Breast epithelium (tissue), 4 donors: ENCODE measurements at regions of chr3 and their contacts with region 1.

Region 1: GRCh38 chr3:48552111-48552951 is 4.3 kb downstream of the PFKFB4 start:
- DNase-seq: peak in 1 of 2 donors; percentile 45
- H3K4me3 ChIP-seq: no peak overlapping the region
- H3K27ac ChIP-seq: peak overlapping the region; percentile 45 to 57
- H3K4me1 ChIP-seq: peaks cover 0 to 4% of the 10 kb centered on the region in 2 donors
- H3K27me3 ChIP-seq: no peaks in the 10 kb centered on the region
- CTCF ChIP-seq: no peak
- POLR2A ChIP-seq: no peak

Region 2: GRCh38 chr3:48294611-48295263 is 257.6 kb before region 1 on chr3:
- intact Hi-C with region 1: no loop called
- DNase-seq: no peak
- H3K4me3 ChIP-seq: no peak overlapping the region
- H3K27ac ChIP-seq: no peak overlapping the region
- H3K4me1 ChIP-seq: no peaks in the 10 kb centered on the region
- H3K27me3 ChIP-seq: no peaks in the 10 kb centered on the region
- CTCF ChIP-seq: no peak
- POLR2A ChIP-seq: no peak

Region 3: GRCh38 chr3:48464713-48465221 is 87.6 kb before region 1 on chr3:
- intact Hi-C with region 1: loop called (anchors 5 kb)
- DNase-seq: no peak
- H3K4me3 ChIP-seq: no peak overlapping the region
- H3K27ac ChIP-seq: peak overlapping the region; percentile 99 to 100
- H3K4me1 ChIP-seq: peaks cover 17 to 24% of the 10 kb centered on the region in 2 donors
- H3K27me3 ChIP-seq: no peaks in the 10 kb centered on the region
- CTCF ChIP-seq: no peak
- POLR2A ChIP-seq: no peak

Region 4: DNA sequence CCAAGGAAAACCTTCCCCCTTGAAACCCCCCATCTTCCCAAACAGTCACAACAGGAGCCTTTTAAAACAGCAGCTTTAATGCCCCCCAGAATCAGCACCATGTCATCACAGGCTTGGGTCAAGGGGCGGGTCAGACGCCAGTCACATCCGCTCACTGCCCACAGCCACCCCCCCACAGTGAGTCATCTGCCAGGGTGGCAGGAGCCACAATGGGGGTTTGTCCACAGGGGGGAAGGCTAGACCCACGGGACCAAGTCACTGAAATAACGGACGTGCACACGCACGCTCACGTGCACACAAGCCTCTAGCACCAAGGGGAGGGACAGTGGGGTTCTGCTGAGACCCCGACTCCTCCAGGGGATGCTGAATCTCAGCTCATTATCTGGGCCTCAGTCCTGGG is 11.7 kb after region 1 on chr3:
- intact Hi-C with region 1: no loop called
- DNase-seq: no peak
- H3K4me3 ChIP-seq: no peak overlapping the region
- H3K27ac ChIP-seq: no peak overlapping the region
- H3K4me1 ChIP-seq: peaks cover 0 to 3% of the 10 kb centered on the region in 2 donors
- H3K27me3 ChIP-seq: no peaks in the 10 kb centered on the region
- CTCF ChIP-seq: no peak
- POLR2A ChIP-seq: no peak